Right cardiac atrium (tissue), 5 donors: ENCODE measurements at regions of chr1 and their contacts with region 1.

Region 1: DNA sequence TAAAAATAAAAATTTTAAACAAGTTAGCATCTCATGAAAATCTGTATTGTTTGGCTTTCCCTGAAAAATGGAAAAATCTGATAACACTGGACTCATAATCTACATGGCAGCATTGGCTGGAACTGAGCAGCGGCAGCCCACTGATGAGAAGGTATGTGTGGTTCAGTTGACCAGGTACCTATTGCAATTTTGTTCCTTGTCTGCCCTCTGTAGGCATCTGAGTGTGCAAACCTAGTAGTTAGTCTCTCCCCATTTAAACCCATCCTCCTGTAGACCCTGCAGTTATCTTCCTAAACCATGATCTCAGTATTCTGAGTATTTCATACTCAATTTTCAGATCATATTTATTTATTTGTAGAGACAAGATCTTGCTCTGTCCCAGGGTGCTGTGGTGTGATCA is 59.4 kb upstream of the SERBP1 start:
- DNase-seq: no peak
- ATAC-seq: peak; percentile 55 to 64
- H3K4me3 ChIP-seq: no peak overlapping the region
- H3K27ac ChIP-seq: no peak overlapping the region
- H3K4me1 ChIP-seq: no peaks in the 10 kb centered on the region
- H3K27me3 ChIP-seq: no peaks in the 10 kb centered on the region

Region 2: GRCh38 chr1:67126111-67126746 is 363.4 kb before region 1 on chr1:
- intact Hi-C with region 1: no loop called
- DNase-seq: no peak
- ATAC-seq: no peak
- H3K4me3 ChIP-seq: no peak overlapping the region
- H3K27ac ChIP-seq: no peak overlapping the region
- H3K4me1 ChIP-seq: no peaks in the 10 kb centered on the region
- H3K27me3 ChIP-seq: no peaks in the 10 kb centered on the region

Region 3: DNA sequence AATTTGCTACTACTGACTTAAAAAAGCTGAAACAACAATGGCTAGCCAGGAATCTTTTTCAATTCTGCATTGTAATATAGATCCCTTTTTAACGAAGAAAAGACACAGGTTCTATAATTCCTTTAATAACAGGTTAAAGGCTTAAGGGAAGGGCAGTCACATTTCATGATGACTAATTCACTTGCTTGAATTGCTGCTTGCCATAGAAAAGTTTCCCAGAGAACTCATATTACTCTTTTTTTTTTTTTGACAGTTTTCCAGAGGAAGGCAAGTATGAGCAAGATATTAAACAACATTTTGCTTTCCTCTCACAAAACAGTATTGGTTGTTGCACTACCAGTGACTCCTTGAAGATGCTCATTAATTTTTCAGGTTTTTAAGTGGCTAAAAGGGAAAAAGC is 262.4 kb before region 1 on chr1:
- intact Hi-C with region 1: loop called in 1 of 4 experiments (anchors 10 kb)
- DNase-seq: no peak
- ATAC-seq: no peak
- H3K4me3 ChIP-seq: no peak overlapping the region
- H3K27ac ChIP-seq: no peak overlapping the region
- H3K4me1 ChIP-seq: no peaks in the 10 kb centered on the region
- H3K27me3 ChIP-seq: no peaks in the 10 kb centered on the region

Region 4: GRCh38 chr1:67347688-67348472 is 141.8 kb before region 1 on chr1:
- intact Hi-C with region 1: loop called in 2 of 4 experiments (anchors 5 kb)
- DNase-seq: peak in 2 of 3 donors; percentile 16 to 55
- ATAC-seq: peak; percentile 80 to 83
- H3K4me3 ChIP-seq: no peak overlapping the region
- H3K27ac ChIP-seq: no peak overlapping the region
- H3K4me1 ChIP-seq: no peaks in the 10 kb centered on the region
- H3K27me3 ChIP-seq: no peaks in the 10 kb centered on the region

Region 5: GRCh38 chr1:67570473-67571143 is 81.0 kb after region 1 on chr1:
- intact Hi-C with region 1: no loop called
- DNase-seq: no peak
- ATAC-seq: peak; percentile 13 to 76
- H3K4me3 ChIP-seq: no peak overlapping the region
- H3K27ac ChIP-seq: no peak overlapping the region
- H3K4me1 ChIP-seq: peaks cover 6% of the 10 kb centered on the region
- H3K27me3 ChIP-seq: no peaks in the 10 kb centered on the region

Region 6: DNA sequence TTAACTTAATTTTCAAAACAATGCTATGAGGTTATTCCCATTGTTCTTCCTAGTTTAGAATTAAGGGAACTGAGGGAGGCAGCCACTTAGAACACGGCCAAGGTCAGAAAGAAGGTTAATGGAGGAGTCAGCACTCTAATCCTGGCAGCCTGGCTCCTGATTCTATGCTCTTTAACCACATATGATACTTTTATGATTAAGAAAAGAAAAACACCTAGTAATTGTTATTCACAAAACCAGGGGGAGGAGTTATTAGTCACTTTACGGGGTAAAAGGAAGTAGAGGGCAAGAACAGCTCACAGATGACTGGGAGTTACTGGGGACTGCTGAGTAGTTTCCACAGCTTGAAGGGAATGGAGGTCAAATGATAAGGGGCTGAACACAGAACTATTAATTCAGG is 234.0 kb after region 1 on chr1:
- intact Hi-C with region 1: no loop called
- DNase-seq: no peak
- ATAC-seq: peak; percentile 55 to 91
- H3K4me3 ChIP-seq: no peak overlapping the region
- H3K27ac ChIP-seq: peak overlapping the region; percentile 73
- H3K4me1 ChIP-seq: peaks cover 9% of the 10 kb centered on the region
- H3K27me3 ChIP-seq: no peaks in the 10 kb centered on the region

Region 7: DNA sequence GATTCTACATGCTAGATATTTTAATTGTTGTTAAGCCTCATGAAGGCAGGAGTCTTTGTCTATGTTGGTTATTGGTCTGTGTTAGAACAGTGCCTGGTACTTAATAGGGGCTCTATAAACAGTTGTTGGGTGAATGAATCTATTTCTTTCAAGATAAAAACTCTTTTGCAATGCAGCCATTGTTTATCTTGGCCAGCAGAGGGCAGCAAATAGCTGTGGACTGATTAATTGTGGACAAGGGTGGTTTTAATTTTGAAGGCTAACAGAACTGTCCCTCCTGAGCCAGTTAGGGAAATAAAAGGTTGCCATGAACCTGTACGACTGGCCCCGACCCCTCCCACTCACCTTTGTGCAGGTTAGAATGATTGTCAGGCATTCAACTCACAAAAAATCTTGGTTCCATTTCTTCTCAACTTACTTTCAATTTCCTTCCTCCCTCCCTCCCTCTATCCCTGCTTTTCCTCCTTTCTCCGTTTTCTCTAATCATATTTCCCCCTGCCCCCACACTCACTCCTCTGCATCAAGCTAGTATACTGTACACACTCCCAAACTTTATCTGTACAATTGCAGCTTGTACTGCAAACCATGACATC is 627.1 kb after region 1 on chr1:
- intact Hi-C with region 1: no loop called
- DNase-seq: peak in 2 of 3 donors; percentile 28 to 53
- ATAC-seq: peak in 1 of 2 donors; percentile 20
- H3K4me3 ChIP-seq: no peak overlapping the region
- H3K27ac ChIP-seq: no peak overlapping the region
- H3K4me1 ChIP-seq: peaks cover 7% of the 10 kb centered on the region
- H3K27me3 ChIP-seq: no peaks in the 10 kb centered on the region